ENCODE measurements at regions of chr2 and their contacts with region 1.

Region 1: GRCh38 chr2:158968396-158969161 is at the start of gene TANC1:
- DNase-seq: peak; percentile 96
- H3K4me3 ChIP-seq: peak within 1 kb of the TSS; percentile 68 to 87 (median 82)
- H3K27ac ChIP-seq: peak within 1 kb of the TSS; percentile 96 to 97 (median 96)
- H3K4me1 ChIP-seq: peaks cover 7 to 46% (median 27%) of the 10 kb centered on the region in 4 donors
- H3K27me3 ChIP-seq: no peaks in the 10 kb centered on the region
- CTCF ChIP-seq: no peak
- EP300 ChIP-seq: no peak
- POLR2A ChIP-seq: peak; percentile 96
- total RNA-seq, gene TANC1: 34.5 to 125 (median 47.0) TPM

Region 2: GRCh38 chr2:159118115-159118858 is 149.7 kb after region 1 on chr2:
- in situ Hi-C with region 1: no loop called
- intact Hi-C with region 1: loop called (anchors 10 kb)
- DNase-seq: peak; percentile 88
- H3K4me3 ChIP-seq: no peak overlapping the region
- H3K27ac ChIP-seq: peak overlapping the region in 2 of 4 donors; percentile 11 to 16
- H3K4me1 ChIP-seq: peaks cover 0 to 29% (median 8%) of the 10 kb centered on the region in 4 donors
- H3K27me3 ChIP-seq: no peaks in the 10 kb centered on the region
- CTCF ChIP-seq: peak; percentile 87 to 93 (median 89)
- EP300 ChIP-seq: no peak
- POLR2A ChIP-seq: no peak

Region 3: DNA sequence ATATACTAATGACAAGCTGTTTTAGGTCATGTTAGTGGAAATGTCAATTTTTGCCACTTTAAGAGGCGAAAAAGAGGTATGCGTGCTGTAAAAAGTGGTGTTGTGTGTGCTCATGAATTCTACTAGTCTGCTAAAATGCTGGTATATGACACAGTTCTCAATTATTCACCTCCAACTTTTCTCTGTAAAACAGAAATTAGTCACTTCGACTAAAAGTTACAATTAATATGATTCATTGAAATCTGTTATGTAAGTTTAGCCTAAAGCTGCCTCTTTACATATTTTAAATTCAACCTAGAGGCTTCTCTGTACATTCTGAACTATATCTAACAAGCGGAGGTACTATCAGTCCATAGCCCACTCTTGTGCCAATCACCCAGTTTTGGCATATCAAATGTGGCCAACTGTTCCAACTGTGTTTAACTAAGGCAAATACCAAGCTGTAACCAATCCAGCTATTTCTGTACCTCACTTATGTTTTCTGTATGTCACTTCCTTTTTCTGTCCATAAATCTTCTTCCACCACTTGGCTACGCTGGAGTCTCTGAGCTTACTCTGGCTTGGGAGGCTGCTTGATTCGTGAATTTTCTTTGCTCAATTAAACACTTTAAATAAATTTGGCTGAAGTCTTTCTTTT is 626.9 kb after region 1 on chr2:
- in situ Hi-C with region 1: no loop called
- intact Hi-C with region 1: no loop called
- DNase-seq: no peak
- H3K4me3 ChIP-seq: no peak overlapping the region
- H3K27ac ChIP-seq: no peak overlapping the region
- H3K4me1 ChIP-seq: peaks cover 0 to 20% (median 5%) of the 10 kb centered on the region in 4 donors
- H3K27me3 ChIP-seq: no peaks in the 10 kb centered on the region
- CTCF ChIP-seq: no peak
- EP300 ChIP-seq: no peak
- POLR2A ChIP-seq: no peak

Measured in transverse colon (tissue), 4 donors.